ENCODE measurements at regions of chr12 and their contacts with region 1.

Region 1: DNA sequence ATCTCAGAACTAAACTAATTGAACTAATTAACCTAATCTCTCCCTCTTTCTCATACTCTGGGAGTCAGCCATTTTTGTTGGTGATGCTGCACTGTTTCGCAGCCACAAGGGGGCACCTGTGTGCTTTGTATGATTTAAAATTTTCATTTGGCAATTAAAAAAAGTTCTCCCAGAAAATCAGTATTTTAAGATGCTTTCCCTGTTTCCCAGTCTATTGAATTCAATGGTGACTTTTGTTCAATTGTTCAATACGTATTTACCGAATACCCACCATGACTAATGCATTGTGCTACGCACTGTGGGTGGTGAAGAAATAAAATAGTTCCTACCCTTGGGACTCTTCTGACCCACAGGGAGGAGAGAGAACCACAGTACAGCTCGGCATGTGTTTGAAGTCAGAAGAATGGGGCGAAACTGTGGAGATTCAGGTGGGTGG is 63.7 kb downstream of the ZNF664 start:
- DNase-seq: peak; percentile 15
- H3K4me3 ChIP-seq: no peak overlapping the region
- H3K27ac ChIP-seq: no peak overlapping the region
- H3K27me3 ChIP-seq: no peaks in the 10 kb centered on the region
- CTCF ChIP-seq: peak; percentile 93

Region 2: DNA sequence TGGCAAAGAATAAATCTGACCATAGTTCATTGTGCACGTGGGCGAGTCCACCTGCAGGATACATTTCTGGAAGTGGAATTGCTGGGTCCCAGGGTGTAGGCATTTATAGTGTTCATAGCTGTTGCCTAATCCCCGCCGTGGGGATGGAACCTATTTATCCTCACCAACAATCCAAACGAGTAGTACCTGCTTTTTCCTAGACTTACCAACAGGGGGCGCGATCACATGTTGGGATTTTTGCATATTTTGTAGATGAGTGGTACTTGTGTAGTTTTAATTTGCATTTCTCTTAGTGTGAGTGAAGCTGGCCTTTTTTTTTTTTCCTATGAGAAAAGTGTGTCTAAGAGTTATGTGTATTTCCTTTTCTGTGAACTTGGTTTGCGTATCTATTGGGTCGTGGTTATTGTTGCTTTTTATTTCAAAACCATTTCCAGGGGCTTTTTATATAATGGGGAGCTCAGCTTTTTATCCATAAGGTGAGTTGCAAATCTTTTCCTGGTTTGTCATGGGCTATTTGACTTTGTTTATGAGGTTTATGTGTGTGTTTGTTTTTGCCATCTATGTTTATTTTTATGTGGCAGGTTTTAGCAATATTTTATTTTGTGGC is 131.3 kb before region 1 on chr12:
- CTCF ChIA-PET with region 1: interaction called, 10 read pairs
- POLR2A ChIA-PET with region 1: interaction called, 5 read pairs
- DNase-seq: peak; percentile 68
- H3K4me3 ChIP-seq: no peak overlapping the region
- H3K27ac ChIP-seq: no peak overlapping the region
- H3K27me3 ChIP-seq: peaks cover 4% of the 10 kb centered on the region
- CTCF ChIP-seq: peak; percentile 79

Region 3: GRCh38 chr12:124013073-124013472 is 23.6 kb before region 1 on chr12:
- CTCF ChIA-PET with region 1: interaction called, 14 read pairs
- POLR2A ChIA-PET with region 1: no interaction called
- DNase-seq: no peak
- H3K4me3 ChIP-seq: no peak overlapping the region
- H3K27ac ChIP-seq: no peak overlapping the region
- H3K27me3 ChIP-seq: no peaks in the 10 kb centered on the region
- CTCF ChIP-seq: no peak

Region 4: GRCh38 chr12:124321040-124321481 is 284.4 kb after region 1 on chr12:
- CTCF ChIA-PET with region 1: interaction called, 24 read pairs
- POLR2A ChIA-PET with region 1: no interaction called
- DNase-seq: no peak
- H3K4me3 ChIP-seq: no peak overlapping the region
- H3K27ac ChIP-seq: no peak overlapping the region
- H3K27me3 ChIP-seq: peaks cover 15% of the 10 kb centered on the region
- CTCF ChIP-seq: peak; percentile 80

Region 5: GRCh38 chr12:124422570-124423523 is 386.2 kb after region 1 on chr12:
- CTCF ChIA-PET with region 1: no interaction called
- POLR2A ChIA-PET with region 1: no interaction called
- DNase-seq: peak; percentile 84
- H3K4me3 ChIP-seq: peak overlapping the region; percentile 22; the same call in 1 of the 2 replicates
- H3K27ac ChIP-seq: peak overlapping the region; percentile 99
- H3K27me3 ChIP-seq: no peaks in the 10 kb centered on the region
- CTCF ChIP-seq: no peak

Measured in AG04450 (cell line).